K562 (cell line): ENCODE measurements at regions of chr7 and their contacts with region 1.

Region 1: DNA sequence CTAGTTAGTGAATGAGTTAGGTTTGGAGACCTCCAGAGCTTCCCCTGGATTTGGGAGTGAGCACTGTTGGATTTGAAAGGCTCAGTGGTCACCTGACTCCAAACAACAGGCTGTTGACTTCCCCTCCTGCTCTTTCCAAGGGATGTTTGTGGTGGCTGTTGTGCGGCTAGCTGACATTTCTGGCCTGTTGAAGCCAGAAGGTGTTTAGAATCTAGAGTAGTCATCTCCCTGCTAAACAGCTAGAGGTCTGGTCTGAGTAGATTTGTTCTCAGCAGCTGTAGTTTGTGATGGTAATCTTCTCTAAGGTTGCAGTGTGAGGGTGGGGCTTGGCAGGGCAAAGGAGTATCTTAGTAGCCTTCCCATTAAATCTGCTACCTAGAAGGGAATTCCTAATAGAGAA is 30.1 kb downstream of the BPGM start:
- DNase-seq: peak in 2 of 4 experiments; percentile 66 to 67
- ATAC-seq: peak; percentile 93
- H3K4me3 ChIP-seq: no peak overlapping the region
- H3K27ac ChIP-seq: no peak overlapping the region; the same call in 2 of the 3 replicates
- H3K4me1 ChIP-seq: peaks cover 0 to 9% of the 10 kb centered on the region in 2 experiments; a peak in 2 of 5 replicates
- H3K27me3 ChIP-seq: no peaks in the 10 kb centered on the region
- CTCF ChIP-seq: no peak
- EP300 ChIP-seq: peak; percentile 42; the same call in 1 of the 2 replicates
- POLR2A ChIP-seq: no peak
- RAD21 ChIP-seq: no peak

Region 2: GRCh38 chr7:134646425-134647305 is 30.1 kb before region 1 on chr7 and contains the start of gene BPGM:
- CTCF ChIA-PET with region 1: no interaction called
- POLR2A ChIA-PET with region 1: interaction called, 6 read pairs
- in situ Hi-C with region 1: no loop called
- intact Hi-C with region 1: loop called (anchors 2 kb)
- DNase-seq: peak; percentile 99 to 100 (median 100)
- ATAC-seq: peak; percentile 99
- H3K4me3 ChIP-seq: peak within 1 kb of the TSS; percentile 62
- H3K27ac ChIP-seq: peak within 1 kb of the TSS; percentile 58
- H3K4me1 ChIP-seq: peaks cover 0 to 4% of the 10 kb centered on the region in 2 experiments; a peak in 2 of 5 replicates
- H3K27me3 ChIP-seq: no peaks in the 10 kb centered on the region
- CTCF ChIP-seq: peak; percentile 63 to 71 (median 66)
- EP300 ChIP-seq: no peak; the same call in none of the 2 replicates
- POLR2A ChIP-seq: peak; percentile 97
- RAD21 ChIP-seq: no peak
- polyA plus RNA-seq, gene BPGM: 33.0 to 46.1 TPM

Region 3: GRCh38 chr7:134660961-134661376 is 15.8 kb before region 1 on chr7:
- CTCF ChIA-PET with region 1: no interaction called
- POLR2A ChIA-PET with region 1: interaction called, 14 read pairs
- in situ Hi-C with region 1: no loop called
- intact Hi-C with region 1: no loop called
- DNase-seq: no peak
- ATAC-seq: no peak
- H3K4me3 ChIP-seq: no peak overlapping the region
- H3K27ac ChIP-seq: no peak overlapping the region
- H3K4me1 ChIP-seq: peaks cover 3 to 28% of the 10 kb centered on the region in 2 experiments; a peak in 3 of 5 replicates
- H3K27me3 ChIP-seq: no peaks in the 10 kb centered on the region
- CTCF ChIP-seq: no peak
- EP300 ChIP-seq: no peak
- POLR2A ChIP-seq: no peak
- RAD21 ChIP-seq: no peak

Region 4: DNA sequence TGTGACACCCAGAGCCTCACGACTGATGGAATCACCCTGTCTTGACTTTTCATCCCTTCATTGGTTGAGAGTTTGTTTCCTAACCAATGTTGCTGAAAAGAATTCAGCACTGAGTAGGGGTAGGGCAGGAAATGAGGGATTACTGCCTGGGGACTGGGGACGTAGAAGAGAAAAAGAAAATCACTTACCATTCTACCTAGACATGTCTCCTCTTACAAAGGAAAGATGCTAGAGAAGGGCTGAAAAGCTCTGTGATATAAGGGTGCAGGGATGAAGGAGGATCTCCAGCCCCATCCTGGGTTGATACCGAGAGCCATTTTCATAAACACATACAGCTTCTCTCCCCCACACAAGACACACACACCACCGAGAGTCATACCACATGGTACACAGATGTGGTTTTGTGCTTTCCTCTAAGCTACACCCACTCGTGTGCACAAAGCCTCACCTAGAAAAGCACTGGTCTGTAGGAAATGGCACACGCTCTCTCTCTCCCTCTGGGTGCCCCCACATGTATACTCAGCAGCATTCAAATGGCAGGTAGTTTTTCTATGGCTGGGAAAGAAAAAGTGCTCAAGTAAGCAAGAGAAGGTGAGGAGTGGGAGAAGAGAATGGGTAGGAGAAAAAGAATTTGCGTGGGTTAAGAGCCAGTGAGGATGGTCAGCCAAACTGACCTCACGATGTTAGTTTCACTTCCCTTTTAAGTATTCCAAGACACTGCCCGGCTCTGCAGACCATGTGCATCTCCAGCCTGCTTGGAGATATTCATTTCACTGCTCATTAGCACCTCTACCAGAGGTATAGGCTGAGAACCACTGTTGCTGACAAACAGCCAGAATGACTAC is 188.5 kb after region 1 on chr7:
- CTCF ChIA-PET with region 1: no interaction called
- POLR2A ChIA-PET with region 1: no interaction called
- in situ Hi-C with region 1: no loop called
- intact Hi-C with region 1: no loop called
- DNase-seq: no peak
- ATAC-seq: peak; percentile 38
- H3K4me3 ChIP-seq: no peak overlapping the region
- H3K27ac ChIP-seq: no peak overlapping the region
- H3K4me1 ChIP-seq: no peaks in the 10 kb centered on the region
- H3K27me3 ChIP-seq: peaks cover 26 to 39% of the 10 kb centered on the region in 2 experiments
- CTCF ChIP-seq: no peak
- EP300 ChIP-seq: no peak
- POLR2A ChIP-seq: no peak
- RAD21 ChIP-seq: no peak